ENCODE measurements at regions of chr3 and their contacts with region 1.

Region 1: GRCh38 chr3:138329127-138329983 is at the start of gene NME9:
- DNase-seq: peak; percentile 85 to 90 (median 89)
- H3K4me3 ChIP-seq: peak within 1 kb of the TSS; percentile 49 to 68
- H3K4me3 Mint-ChIP-seq: peak within 1 kb of the TSS; percentile 95 to 99 (median 98)
- H3K27ac ChIP-seq: peak within 1 kb of the TSS; percentile 72
- H3K27ac Mint-ChIP-seq: peak within 1 kb of the TSS; percentile 81 to 99 (median 98)
- H3K4me1 ChIP-seq: peaks cover 10% of the 10 kb centered on the region
- H3K4me1 Mint-ChIP-seq: peaks cover 17 to 41% (median 25%) of the 10 kb centered on the region in 4 donors
- H3K27me3 ChIP-seq: no peaks in the 10 kb centered on the region
- H3K27me3 Mint-ChIP-seq: no peaks in the 10 kb centered on the region
- total RNA-seq, gene NME9: 1.0 to 1.4 TPM

Region 2: DNA sequence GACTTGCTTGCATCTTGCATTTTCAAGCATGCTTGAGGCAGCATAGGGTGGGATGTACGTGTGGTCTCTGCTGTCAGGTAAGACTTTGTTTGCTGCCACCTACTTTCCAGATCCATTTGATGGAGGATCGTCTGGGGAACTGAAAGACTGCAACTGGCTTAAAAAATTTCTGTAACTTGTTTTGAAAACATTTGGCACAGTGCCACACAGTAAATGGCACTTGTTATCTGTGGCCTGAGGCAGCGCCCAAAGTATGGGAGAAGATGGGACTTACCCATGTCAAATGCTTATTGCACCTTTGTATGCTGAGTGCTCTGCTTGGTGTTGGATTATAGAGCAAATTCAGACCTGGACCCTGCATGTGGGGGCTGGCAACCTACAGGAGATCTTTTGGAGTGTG is 1098.2 kb before region 1 on chr3:
- CTCF ChIA-PET with region 1: no interaction called
- POLR2A ChIA-PET with region 1: no interaction called
- intact Hi-C with region 1: no loop called
- DNase-seq: no peak
- H3K4me3 ChIP-seq: no peak overlapping the region
- H3K4me3 Mint-ChIP-seq: no peak overlapping the region
- H3K27ac ChIP-seq: no peak overlapping the region
- H3K27ac Mint-ChIP-seq: no peak overlapping the region
- H3K4me1 ChIP-seq: no peaks in the 10 kb centered on the region
- H3K4me1 Mint-ChIP-seq: no peaks in the 10 kb centered on the region
- H3K27me3 ChIP-seq: no peaks in the 10 kb centered on the region
- H3K27me3 Mint-ChIP-seq: peaks cover 0 to 2% of the 10 kb centered on the region in 2 donors

Region 3: GRCh38 chr3:137992592-137992991 is 336.8 kb before region 1 on chr3:
- CTCF ChIA-PET with region 1: no interaction called
- POLR2A ChIA-PET with region 1: no interaction called
- intact Hi-C with region 1: no loop called
- DNase-seq: no peak
- H3K4me3 ChIP-seq: no peak overlapping the region
- H3K4me3 Mint-ChIP-seq: no peak overlapping the region
- H3K27ac ChIP-seq: no peak overlapping the region
- H3K27ac Mint-ChIP-seq: no peak overlapping the region
- H3K4me1 ChIP-seq: no peaks in the 10 kb centered on the region
- H3K4me1 Mint-ChIP-seq: no peaks in the 10 kb centered on the region
- H3K27me3 ChIP-seq: no peaks in the 10 kb centered on the region
- H3K27me3 Mint-ChIP-seq: peaks cover 0 to under 1% of the 10 kb centered on the region in 2 donors

Region 4: GRCh38 chr3:138174421-138175122 is 154.8 kb before region 1 on chr3 and contains the start of gene DBR1:
- CTCF ChIA-PET with region 1: interaction called, 10 read pairs
- POLR2A ChIA-PET with region 1: interaction called, 7 read pairs
- intact Hi-C with region 1: loop called (anchors 1 kb)
- DNase-seq: peak; percentile 78 to 84 (median 82)
- H3K4me3 ChIP-seq: peak within 1 kb of the TSS; percentile 54 to 91
- H3K4me3 Mint-ChIP-seq: peak within 1 kb of the TSS; percentile 96 to 100 (median 97)
- H3K27ac ChIP-seq: peak within 1 kb of the TSS; percentile 70
- H3K27ac Mint-ChIP-seq: peak within 1 kb of the TSS; percentile 95 to 99 (median 98)
- H3K4me1 ChIP-seq: peaks cover 32% of the 10 kb centered on the region
- H3K4me1 Mint-ChIP-seq: peaks cover 21 to 47% (median 35%) of the 10 kb centered on the region in 4 donors
- H3K27me3 ChIP-seq: no peaks in the 10 kb centered on the region
- H3K27me3 Mint-ChIP-seq: no peaks in the 10 kb centered on the region
- total RNA-seq, gene DBR1: 34.2 to 36.2 TPM

Region 5: GRCh38 chr3:138283802-138284478 is 45.4 kb before region 1 on chr3:
- CTCF ChIA-PET with region 1: interaction called, 7 read pairs
- POLR2A ChIA-PET with region 1: no interaction called
- intact Hi-C with region 1: loop called (anchors 2 kb)
- DNase-seq: no peak
- H3K4me3 ChIP-seq: no peak overlapping the region
- H3K4me3 Mint-ChIP-seq: no peak overlapping the region
- H3K27ac ChIP-seq: no peak overlapping the region
- H3K27ac Mint-ChIP-seq: no peak overlapping the region
- H3K4me1 ChIP-seq: no peaks in the 10 kb centered on the region
- H3K4me1 Mint-ChIP-seq: peaks cover 0 to 8% (median under 1%) of the 10 kb centered on the region in 4 donors
- H3K27me3 ChIP-seq: no peaks in the 10 kb centered on the region
- H3K27me3 Mint-ChIP-seq: no peaks in the 10 kb centered on the region

Region 6: DNA sequence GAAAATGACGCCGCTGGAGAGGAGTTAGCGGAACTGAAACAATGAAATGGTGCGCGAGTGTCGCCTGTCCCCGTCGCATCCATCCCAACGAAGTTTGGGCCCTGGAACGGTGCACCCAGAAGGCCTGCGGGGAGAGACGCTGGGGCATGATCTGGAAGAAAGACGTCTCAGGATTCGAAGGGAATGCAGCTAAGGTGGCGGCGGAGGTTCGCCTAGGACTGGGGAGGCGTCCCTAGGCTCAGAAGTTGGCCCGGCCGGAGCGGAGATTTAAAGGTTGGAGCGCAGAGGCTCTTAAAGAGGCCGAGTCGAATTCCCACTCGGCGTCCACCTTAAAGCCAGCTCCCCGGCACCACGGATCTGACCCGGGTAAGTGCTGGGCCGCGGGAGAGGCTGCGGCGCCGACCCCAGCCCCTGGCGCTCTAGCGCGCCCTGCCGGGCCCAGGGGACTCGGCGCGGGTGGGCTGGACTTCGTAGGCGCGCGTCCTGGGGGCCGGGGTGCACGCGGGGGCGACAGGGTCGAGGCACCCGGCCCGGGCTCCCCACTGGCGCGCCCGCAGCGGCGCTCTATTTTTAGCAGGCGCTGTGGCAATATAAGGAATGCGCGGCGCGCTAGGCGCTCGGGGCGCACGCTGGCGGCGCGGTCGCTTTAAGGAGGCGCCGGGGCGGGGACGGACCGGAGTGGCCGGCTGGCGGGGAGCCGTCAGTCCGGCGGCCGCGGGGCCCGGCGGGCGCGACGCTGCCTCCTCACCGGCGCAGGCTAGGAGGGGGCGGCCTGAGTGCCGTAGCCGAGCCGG is 18.8 kb after region 1 on chr3 and contains the start of gene MRAS:
- CTCF ChIA-PET with region 1: interaction called, 3 read pairs
- POLR2A ChIA-PET with region 1: no interaction called
- intact Hi-C with region 1: loop called (anchors 2 kb)
- DNase-seq: no peak
- H3K4me3 ChIP-seq: peak within 1 kb of the TSS in 1 of 2 donors; percentile 22
- H3K4me3 Mint-ChIP-seq: peak within 1 kb of the TSS; percentile 85 to 97 (median 92)
- H3K27ac ChIP-seq: no peak within 1 kb of the TSS
- H3K27ac Mint-ChIP-seq: peak within 1 kb of the TSS in 3 of 7 donors; percentile 31 to 88 (median 86)
- H3K4me1 ChIP-seq: no peaks in the 10 kb centered on the region
- H3K4me1 Mint-ChIP-seq: peaks cover 2 to 12% (median 7%) of the 10 kb centered on the region in 4 donors
- H3K27me3 ChIP-seq: no peaks in the 10 kb centered on the region
- H3K27me3 Mint-ChIP-seq: peaks cover 14 to 26% of the 10 kb centered on the region in 2 donors
- total RNA-seq, gene MRAS: 1.3 to 2.0 TPM

Region 7: DNA sequence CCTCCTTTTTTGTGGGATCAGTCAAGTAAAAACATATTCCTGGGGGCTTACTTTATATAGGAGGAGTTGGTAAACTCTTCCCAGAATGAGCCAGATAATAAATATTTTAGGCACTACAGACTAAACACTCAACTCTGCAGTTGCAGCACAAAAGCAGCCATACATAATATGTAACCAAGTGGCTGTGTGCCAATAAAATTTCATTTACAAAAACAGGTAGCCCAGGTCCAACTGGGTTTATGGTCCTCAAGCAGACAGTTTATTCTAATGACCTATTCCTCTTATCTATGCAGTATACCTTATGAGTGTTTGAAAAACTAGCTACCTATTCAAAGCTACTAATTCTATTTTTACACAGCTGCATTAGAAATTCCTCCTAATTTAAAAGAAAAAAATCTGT is 341.1 kb after region 1 on chr3:
- CTCF ChIA-PET with region 1: no interaction called
- POLR2A ChIA-PET with region 1: no interaction called
- intact Hi-C with region 1: no loop called
- DNase-seq: no peak
- H3K4me3 ChIP-seq: no peak overlapping the region
- H3K4me3 Mint-ChIP-seq: no peak overlapping the region
- H3K27ac ChIP-seq: no peak overlapping the region
- H3K27ac Mint-ChIP-seq: no peak overlapping the region
- H3K4me1 ChIP-seq: no peaks in the 10 kb centered on the region
- H3K4me1 Mint-ChIP-seq: no peaks in the 10 kb centered on the region
- H3K27me3 ChIP-seq: no peaks in the 10 kb centered on the region
- H3K27me3 Mint-ChIP-seq: no peaks in the 10 kb centered on the region

Region 8: GRCh38 chr3:139533781-139534443 is 1204.6 kb after region 1 on chr3:
- CTCF ChIA-PET with region 1: no interaction called
- POLR2A ChIA-PET with region 1: no interaction called
- intact Hi-C with region 1: no loop called
- DNase-seq: no peak
- H3K4me3 ChIP-seq: no peak overlapping the region
- H3K4me3 Mint-ChIP-seq: no peak overlapping the region
- H3K27ac ChIP-seq: no peak overlapping the region
- H3K27ac Mint-ChIP-seq: no peak overlapping the region
- H3K4me1 ChIP-seq: no peaks in the 10 kb centered on the region
- H3K4me1 Mint-ChIP-seq: peaks cover 0 to 3% (median 0%) of the 10 kb centered on the region in 4 donors
- H3K27me3 ChIP-seq: no peaks in the 10 kb centered on the region
- H3K27me3 Mint-ChIP-seq: peaks cover 12 to 13% of the 10 kb centered on the region in 2 donors